Pancreas (tissue), 10 donors: ENCODE measurements at regions of chr10 and their contacts with region 1.

Region 1: DNA sequence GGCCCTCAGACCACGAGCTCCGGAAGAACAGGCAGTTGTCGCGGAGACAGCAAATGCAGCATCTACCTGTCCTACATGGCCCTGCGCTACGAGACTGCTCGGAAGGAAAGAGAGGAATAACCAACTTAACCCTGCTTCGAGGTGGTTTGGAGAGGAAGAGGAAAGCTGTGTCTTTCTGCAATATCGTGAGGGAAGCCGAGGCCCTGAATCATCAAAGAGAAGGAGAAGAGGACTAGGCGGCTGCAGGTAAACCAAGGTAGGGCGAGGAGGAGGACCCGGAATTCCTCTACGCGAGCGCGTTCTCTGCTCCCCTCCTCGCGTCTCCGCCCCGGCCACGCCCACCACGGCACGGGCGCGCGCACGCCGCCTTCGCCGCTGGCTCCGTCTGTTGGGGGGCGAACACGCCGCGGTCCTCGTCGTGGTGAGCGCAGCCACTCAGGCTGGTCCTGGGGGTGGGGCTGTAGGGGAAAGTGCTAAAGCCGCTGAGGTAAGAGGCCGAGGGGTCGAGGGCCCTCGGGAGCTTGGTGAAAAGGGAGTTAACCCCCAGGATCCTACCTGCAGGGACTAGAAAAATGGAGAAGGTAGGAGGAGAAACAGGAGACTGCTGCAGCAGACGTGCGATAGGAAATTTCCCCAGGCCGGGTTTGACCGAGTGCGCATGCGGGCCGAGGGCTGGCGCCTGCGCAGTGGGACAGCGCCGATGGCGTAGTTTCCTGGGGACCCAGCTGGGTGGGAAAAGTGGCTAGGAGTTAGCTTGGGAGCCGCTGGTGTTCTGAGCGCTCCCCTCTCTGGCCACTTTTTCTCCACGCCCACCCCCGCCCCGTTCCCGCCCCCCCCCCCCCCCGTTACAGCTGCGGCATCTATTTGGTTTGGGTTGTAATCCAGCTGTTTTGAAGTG is at the starts of genes ANAPC16 and ASCC1:
- DNase-seq: peak; percentile 89 to 97 (median 94)
- ATAC-seq: peak; percentile 91 to 96 (median 94)
- H3K4me3 ChIP-seq: peak within 1 kb of the TSS; percentile 67 to 73 (median 71)
- H3K27ac ChIP-seq: peak within 1 kb of the TSS; percentile 98 to 100 (median 98)
- H3K4me1 ChIP-seq: peaks cover 19 to 33% (median 19%) of the 10 kb centered on the region in 3 donors
- H3K27me3 ChIP-seq: no peaks in the 10 kb centered on the region
- CTCF ChIP-seq: no peak
- total RNA-seq, gene ANAPC16: 52.4 to 92.6 (median 68.0) TPM
- total RNA-seq, gene ASCC1: 11.7 to 26.0 (median 16.9) TPM

Region 2: GRCh38 chr10:71945819-71946474 is 270.0 kb before region 1 on chr10:
- intact Hi-C with region 1: no loop called
- DNase-seq: no peak
- ATAC-seq: no peak
- H3K4me3 ChIP-seq: no peak overlapping the region
- H3K27ac ChIP-seq: no peak overlapping the region
- H3K4me1 ChIP-seq: no peaks in the 10 kb centered on the region
- H3K27me3 ChIP-seq: no peaks in the 10 kb centered on the region
- CTCF ChIP-seq: no peak

Region 3: GRCh38 chr10:72097448-72098300 is 118.2 kb before region 1 on chr10:
- intact Hi-C with region 1: no loop called
- DNase-seq: peak in 4 of 6 donors; percentile 47 to 77 (median 56)
- ATAC-seq: peak; percentile 95 to 98 (median 96)
- H3K4me3 ChIP-seq: no peak overlapping the region
- H3K27ac ChIP-seq: no peak overlapping the region
- H3K4me1 ChIP-seq: peaks cover 20 to 22% (median 22%) of the 10 kb centered on the region in 3 donors
- H3K27me3 ChIP-seq: no peaks in the 10 kb centered on the region
- CTCF ChIP-seq: no peak

Region 4: DNA sequence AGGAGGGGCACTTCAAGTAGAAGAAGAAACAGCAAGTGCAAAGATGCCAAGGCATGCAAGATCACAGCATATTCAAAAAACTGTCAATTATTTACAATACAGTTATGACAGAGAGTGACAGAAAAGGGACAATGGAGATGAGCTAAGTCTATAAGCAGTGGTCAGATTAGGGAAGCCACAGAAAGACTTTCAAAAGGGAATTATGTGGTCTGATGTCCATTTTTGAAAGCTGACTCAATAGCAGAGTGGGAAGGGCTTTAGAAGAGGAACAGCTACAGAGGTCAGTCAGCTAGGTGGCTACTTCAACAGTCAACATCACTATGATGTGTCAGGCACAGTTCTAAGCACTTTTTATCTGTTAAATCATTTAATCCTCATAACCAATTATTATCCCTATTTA is 82.4 kb before region 1 on chr10:
- intact Hi-C with region 1: loop called in 1 of 3 experiments (anchors 10 kb)
- DNase-seq: no peak
- ATAC-seq: peak in 2 of 4 donors; percentile 59 to 74
- H3K4me3 ChIP-seq: no peak overlapping the region
- H3K27ac ChIP-seq: no peak overlapping the region
- H3K4me1 ChIP-seq: no peaks in the 10 kb centered on the region
- H3K27me3 ChIP-seq: no peaks in the 10 kb centered on the region
- CTCF ChIP-seq: no peak

Region 5: GRCh38 chr10:72334825-72335393 is 119.0 kb after region 1 on chr10:
- intact Hi-C with region 1: no loop called
- DNase-seq: peak; percentile 80 to 94 (median 88)
- ATAC-seq: peak; percentile 27 to 49 (median 39)
- H3K4me3 ChIP-seq: no peak overlapping the region
- H3K27ac ChIP-seq: peak overlapping the region; percentile 78 to 97 (median 89)
- H3K4me1 ChIP-seq: peaks cover 60 to 72% (median 68%) of the 10 kb centered on the region in 3 donors
- H3K27me3 ChIP-seq: no peaks in the 10 kb centered on the region
- CTCF ChIP-seq: no peak